Esophagus squamous epithelium (tissue), 5 donors: ENCODE measurements at regions of chr17 and their contacts with region 1.

Region 1: GRCh38 chr17:69516911-69517310 is 102.4 kb downstream of the MAP2K6 start:
- DNase-seq: no peak
- H3K4me3 ChIP-seq: no peak overlapping the region
- H3K27ac ChIP-seq: no peak overlapping the region
- H3K4me1 ChIP-seq: no peaks in the 10 kb centered on the region
- H3K27me3 ChIP-seq: no peaks in the 10 kb centered on the region
- CTCF ChIP-seq: no peak
- POLR2A ChIP-seq: no peak

Region 2: GRCh38 chr17:69335058-69335457 is 181.9 kb before region 1 on chr17:
- intact Hi-C with region 1: loop called (anchors 5 kb)
- DNase-seq: no peak
- H3K4me3 ChIP-seq: no peak overlapping the region
- H3K27ac ChIP-seq: no peak overlapping the region
- H3K4me1 ChIP-seq: no peaks in the 10 kb centered on the region
- H3K27me3 ChIP-seq: no peaks in the 10 kb centered on the region
- CTCF ChIP-seq: peak in 5 of 6 experiments; percentile 39 to 66 (median 49)
- POLR2A ChIP-seq: no peak